Endothelial cell of umbilical vein (primary cell): ENCODE measurements at regions of chr1 and their contacts with region 1.

Region 1: DNA sequence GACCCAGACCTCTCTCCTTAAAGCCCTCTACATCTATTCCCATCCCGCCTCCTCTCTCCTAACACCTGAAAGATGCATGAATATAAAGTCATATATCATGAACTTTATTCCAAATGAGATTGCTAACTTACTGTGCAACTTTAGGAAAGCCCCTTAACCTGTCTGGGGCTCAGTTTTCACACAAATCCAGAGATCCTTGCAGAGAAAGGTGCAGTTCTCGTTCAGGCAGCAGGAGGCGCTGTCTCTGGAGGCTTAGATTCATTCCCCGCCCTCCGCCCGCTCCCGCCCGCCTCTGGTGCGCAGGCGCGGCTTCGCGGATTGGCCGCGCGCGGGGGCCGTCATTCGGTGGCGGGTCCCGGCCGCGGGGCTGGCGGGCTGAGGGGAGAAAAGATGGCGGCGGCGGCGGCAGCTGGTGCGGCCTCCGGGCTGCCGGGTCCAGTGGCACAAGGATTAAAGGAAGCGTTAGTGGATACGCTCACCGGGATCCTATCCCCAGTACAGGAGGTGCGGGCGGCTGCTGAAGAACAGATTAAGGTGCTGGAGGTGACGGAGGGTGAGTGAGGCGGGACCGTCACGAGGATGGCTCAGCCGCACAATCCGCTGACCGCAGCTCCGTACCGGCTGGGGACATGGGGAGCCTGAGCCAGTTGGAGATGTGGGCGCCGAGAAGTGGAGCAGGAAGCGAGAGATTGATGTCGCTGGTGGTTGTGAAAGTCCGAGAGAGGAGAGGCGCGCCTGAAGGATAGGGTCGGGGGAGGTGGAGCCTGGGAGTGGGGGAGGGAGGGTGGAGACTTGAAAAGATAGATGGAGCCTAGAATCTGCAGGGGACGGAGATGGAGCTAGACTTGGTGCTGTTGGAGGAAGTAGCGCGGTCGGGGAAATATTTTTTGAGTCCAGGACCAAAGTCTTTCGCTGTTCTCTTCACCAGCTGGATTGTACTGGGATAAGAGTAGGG is at the start of gene IPO9:
- DNase-seq: peak; percentile 94
- H3K4me3 ChIP-seq: peak within 1 kb of the TSS; percentile 94 to 97 (median 95)
- H3K27ac ChIP-seq: peak within 1 kb of the TSS; percentile 89
- H3K4me1 ChIP-seq: peaks cover 14% of the 10 kb centered on the region
- H3K27me3 ChIP-seq: no peaks in the 10 kb centered on the region
- CTCF ChIP-seq: peak; percentile 93 to 96
- POLR2A ChIP-seq: peak; percentile 33
- total RNA-seq, gene IPO9: 104 and 114 TPM in 2 replicates

Region 2: GRCh38 chr1:201709564-201710295 is 119.4 kb before region 1 on chr1:
- CTCF ChIA-PET with region 1: interaction called, 4 read pairs
- POLR2A ChIA-PET with region 1: no interaction called
- dilution Hi-C with region 1: no loop called
- intact Hi-C with region 1: loop called (anchors 1 kb)
- DNase-seq: peak; percentile 67
- H3K4me3 ChIP-seq: no peak overlapping the region
- H3K27ac ChIP-seq: peak overlapping the region; percentile 0
- H3K4me1 ChIP-seq: peaks cover 36% of the 10 kb centered on the region
- H3K27me3 ChIP-seq: no peaks in the 10 kb centered on the region
- CTCF ChIP-seq: peak; percentile 80 to 97
- POLR2A ChIP-seq: no peak

Region 3: DNA sequence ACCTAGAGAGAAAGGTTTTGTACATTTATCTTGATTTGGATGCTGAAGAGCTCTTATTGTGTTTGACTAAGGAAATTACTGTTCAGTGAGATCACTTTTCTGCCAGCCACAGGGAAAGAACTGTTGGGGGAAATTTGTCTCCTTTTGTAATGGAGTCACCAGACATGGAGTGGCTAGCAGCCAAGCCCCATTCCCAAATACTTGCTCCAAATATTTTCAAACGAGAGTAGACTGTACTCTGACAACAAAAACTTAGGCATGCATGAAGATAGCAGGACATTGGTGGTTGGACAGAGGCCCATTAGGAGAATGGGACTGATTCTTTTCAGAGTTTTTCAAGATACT is 20.9 kb after region 1 on chr1:
- CTCF ChIA-PET with region 1: interaction called, 49 read pairs
- POLR2A ChIA-PET with region 1: interaction called, 4 read pairs
- dilution Hi-C with region 1: no loop called
- intact Hi-C with region 1: loop called (anchors 1 kb)
- DNase-seq: peak; percentile 92
- H3K4me3 ChIP-seq: peak overlapping the region in 1 of 3 experiments; percentile 9
- H3K27ac ChIP-seq: peak overlapping the region; percentile 90
- H3K4me1 ChIP-seq: peaks cover 49% of the 10 kb centered on the region
- H3K27me3 ChIP-seq: no peaks in the 10 kb centered on the region
- CTCF ChIP-seq: no peak
- POLR2A ChIP-seq: no peak

Region 4: DNA sequence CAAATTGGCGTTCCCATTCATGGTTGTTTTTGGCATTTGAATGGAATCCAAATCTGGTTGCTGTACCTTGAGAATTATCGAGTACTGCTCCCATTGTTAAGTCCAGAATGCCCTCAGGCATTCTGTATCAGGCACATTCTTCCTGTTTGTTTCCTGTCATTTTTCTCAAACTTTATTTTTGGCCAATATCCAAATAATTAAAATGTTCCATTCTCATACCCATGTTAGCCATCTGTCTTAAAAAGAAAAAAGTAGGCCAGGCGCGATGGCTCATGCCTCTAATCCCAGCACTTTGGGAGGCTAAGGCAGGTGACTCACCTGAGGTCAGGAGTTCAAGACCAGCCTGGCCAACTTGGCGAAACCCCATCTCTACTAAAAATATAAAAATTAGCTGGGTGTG is 30.3 kb after region 1 on chr1:
- CTCF ChIA-PET with region 1: interaction called, 8 read pairs
- POLR2A ChIA-PET with region 1: no interaction called
- dilution Hi-C with region 1: no loop called
- intact Hi-C with region 1: loop called (anchors 1 kb)
- DNase-seq: peak; percentile 89
- H3K4me3 ChIP-seq: no peak overlapping the region
- H3K27ac ChIP-seq: peak overlapping the region; percentile 26
- H3K4me1 ChIP-seq: peaks cover 24% of the 10 kb centered on the region
- H3K27me3 ChIP-seq: no peaks in the 10 kb centered on the region
- CTCF ChIP-seq: no peak
- POLR2A ChIP-seq: no peak

Region 5: DNA sequence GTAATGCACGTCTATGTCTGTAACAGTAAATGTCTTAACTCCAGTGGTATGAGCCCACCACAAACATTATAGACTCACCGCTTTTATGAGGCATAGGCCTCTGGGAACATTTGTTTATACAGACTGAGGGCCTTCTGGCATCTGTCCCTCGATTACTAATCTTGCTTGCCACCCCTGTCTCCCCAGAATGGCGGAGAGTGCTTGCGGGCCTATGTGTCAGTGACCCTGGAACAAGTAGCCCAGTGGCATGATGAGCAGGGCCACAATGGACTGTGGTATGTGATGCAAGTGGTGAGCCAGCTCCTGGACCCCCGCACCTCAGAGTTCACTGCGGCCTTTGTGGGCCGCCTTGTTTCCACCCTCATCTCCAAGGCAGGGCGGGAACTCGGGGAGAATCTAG is 41.3 kb after region 1 on chr1:
- CTCF ChIA-PET with region 1: interaction called, 18 read pairs
- POLR2A ChIA-PET with region 1: no interaction called
- dilution Hi-C with region 1: no loop called
- intact Hi-C with region 1: no loop called
- DNase-seq: no peak
- H3K4me3 ChIP-seq: no peak overlapping the region
- H3K27ac ChIP-seq: no peak overlapping the region
- H3K4me1 ChIP-seq: no peaks in the 10 kb centered on the region
- H3K27me3 ChIP-seq: no peaks in the 10 kb centered on the region
- CTCF ChIP-seq: no peak
- POLR2A ChIP-seq: no peak

Region 6: GRCh38 chr1:201877877-201878401 is 48.8 kb after region 1 on chr1:
- CTCF ChIA-PET with region 1: interaction called, 21 read pairs
- POLR2A ChIA-PET with region 1: no interaction called
- dilution Hi-C with region 1: no loop called
- intact Hi-C with region 1: loop called (anchors 1 kb)
- DNase-seq: peak; percentile 64
- H3K4me3 ChIP-seq: no peak overlapping the region
- H3K27ac ChIP-seq: no peak overlapping the region
- H3K4me1 ChIP-seq: no peaks in the 10 kb centered on the region
- H3K27me3 ChIP-seq: no peaks in the 10 kb centered on the region
- CTCF ChIP-seq: peak; percentile 53 to 67
- POLR2A ChIP-seq: no peak